WTC11 (cell line): ENCODE measurements at regions of chr7 and their contacts with region 1.

Region 1: GRCh38 chr7:56063882-56064625 is at the start of gene SUMF2:
- DNase-seq: peak; percentile 88
- ATAC-seq: peak; percentile 90
- H3K4me3 Mint-ChIP-seq: peak within 1 kb of the TSS; percentile 90
- H3K27ac Mint-ChIP-seq: peak within 1 kb of the TSS; percentile 83
- H3K4me1 Mint-ChIP-seq: peaks cover 16% of the 10 kb centered on the region
- H3K27me3 Mint-ChIP-seq: no peaks in the 10 kb centered on the region
- CTCF ChIP-seq: no peak
- total RNA-seq, gene SUMF2: 99.6 to 105 TPM (median 99.6 TPM) in 3 replicates

Region 2: GRCh38 chr7:56051339-56052191 is 12.5 kb before region 1 on chr7 and contains the starts of genes CCT6A and PSPH:
- CTCF ChIA-PET with region 1: interaction called, 13 read pairs
- POLR2A ChIA-PET with region 1: interaction called, 41 read pairs
- DNase-seq: peak; percentile 98
- ATAC-seq: peak; percentile 97
- H3K4me3 Mint-ChIP-seq: peak within 1 kb of the TSS; percentile 96
- H3K27ac Mint-ChIP-seq: peak within 1 kb of the TSS; percentile 99
- H3K4me1 Mint-ChIP-seq: peaks cover 17% of the 10 kb centered on the region
- H3K27me3 Mint-ChIP-seq: no peaks in the 10 kb centered on the region
- CTCF ChIP-seq: no peak
- total RNA-seq, gene CCT6A: 208 to 246 TPM (median 209 TPM) in 3 replicates
- total RNA-seq, gene PSPH: 43.7 to 49.3 TPM (median 49.2 TPM) in 3 replicates

Region 3: DNA sequence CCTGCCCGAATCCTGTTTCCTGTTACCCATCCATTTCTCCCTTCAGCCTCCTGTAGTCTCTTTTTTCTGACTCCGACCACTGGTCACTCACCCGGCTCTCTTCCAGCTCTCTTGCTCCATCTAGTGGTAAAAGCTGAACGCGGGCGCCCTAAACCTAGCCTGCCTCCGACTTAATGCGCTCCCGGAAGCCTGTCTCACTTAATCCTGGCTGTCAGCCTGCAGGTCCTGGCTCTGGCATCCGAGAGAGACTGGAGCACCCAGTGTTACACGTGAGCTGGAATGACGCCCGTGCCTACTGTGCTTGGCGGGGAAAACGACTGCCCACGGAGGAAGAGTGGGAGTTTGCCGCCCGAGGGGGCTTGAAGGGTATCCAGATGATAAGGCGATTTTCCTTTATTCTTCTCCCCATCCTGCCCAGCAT is 10.3 kb after region 1 on chr7:
- CTCF ChIA-PET with region 1: interaction called, 8 read pairs
- POLR2A ChIA-PET with region 1: interaction called, 16 read pairs
- DNase-seq: peak; percentile 86
- ATAC-seq: peak; percentile 94
- H3K4me3 Mint-ChIP-seq: no peak overlapping the region
- H3K27ac Mint-ChIP-seq: peak overlapping the region; percentile 98
- H3K4me1 Mint-ChIP-seq: peaks cover 3% of the 10 kb centered on the region
- H3K27me3 Mint-ChIP-seq: no peaks in the 10 kb centered on the region
- CTCF ChIP-seq: peak; percentile 85